Caco-2 (cell line): ENCODE measurements at regions of chr20 and their contacts with region 1.

Region 1: DNA sequence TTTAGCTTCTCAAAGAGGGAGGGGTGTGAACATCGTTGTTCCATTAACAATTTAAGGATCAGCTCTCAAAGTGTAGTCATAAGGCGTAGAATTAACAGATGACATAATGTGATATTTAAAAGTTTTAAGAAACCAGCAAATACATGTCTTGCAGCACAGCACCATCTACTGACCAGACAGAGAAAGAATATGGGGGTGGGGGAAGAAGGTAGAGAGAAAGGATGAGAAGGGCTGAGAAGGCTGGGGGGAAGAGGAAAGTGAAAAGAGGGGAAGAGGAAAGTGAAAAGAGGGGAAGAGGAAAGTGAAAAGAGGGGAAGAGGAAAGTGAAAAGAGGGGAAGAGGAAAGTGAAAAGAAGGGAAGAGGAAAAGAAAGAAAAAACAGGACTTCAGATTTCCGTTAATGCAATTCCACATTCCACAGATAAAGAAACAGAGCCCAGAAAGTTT is 80.9 kb downstream of the HAO1 start:
- DNase-seq: peak in 1 of 2 experiments; percentile 31
- H3K4me3 ChIP-seq: no peak overlapping the region
- H3K4me3 Mint-ChIP-seq: no peak overlapping the region
- H3K27ac Mint-ChIP-seq: no peak overlapping the region
- H3K4me1 ChIP-seq: no peaks in the 10 kb centered on the region
- H3K4me1 Mint-ChIP-seq: no peaks in the 10 kb centered on the region
- H3K27me3 ChIP-seq: no peaks in the 10 kb centered on the region
- H3K27me3 Mint-ChIP-seq: peaks cover 10% of the 10 kb centered on the region
- CTCF ChIP-seq: peak; percentile 38 to 75

Region 2: DNA sequence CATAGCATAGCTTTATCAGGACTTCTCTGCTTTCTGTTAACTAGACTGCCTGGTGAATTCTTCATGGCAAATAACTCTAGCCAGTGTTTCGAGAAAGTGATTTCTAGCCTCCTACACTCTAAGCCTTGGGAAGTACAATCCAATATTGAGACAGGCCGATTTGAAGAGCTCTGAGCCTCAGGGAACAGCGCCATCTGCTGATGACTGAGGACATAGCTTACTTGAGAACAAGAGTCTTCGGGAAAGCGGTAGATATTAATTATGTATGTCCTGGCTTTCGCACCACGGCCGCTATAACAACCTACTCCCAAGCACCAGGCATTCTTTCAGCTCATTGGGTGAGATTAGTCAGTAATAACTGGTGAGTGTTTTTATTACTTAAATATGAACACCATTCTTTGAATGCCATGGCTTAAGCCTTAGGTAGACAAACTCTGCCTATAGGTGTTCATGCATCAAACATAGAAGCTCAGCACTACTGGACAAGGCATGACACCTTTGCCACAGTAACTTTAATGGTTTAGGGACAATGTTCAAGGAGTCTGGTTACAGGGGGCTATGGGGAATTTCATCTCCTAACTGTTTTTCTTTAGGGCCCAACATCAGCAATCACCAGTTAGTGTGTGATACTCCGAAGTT is 573.3 kb before region 1 on chr20:
- CTCF ChIA-PET with region 1: no interaction called
- POLR2A ChIA-PET with region 1: no interaction called
- intact Hi-C with region 1: loop called (anchors 5 kb)
- DNase-seq: peak; percentile 75 to 77
- H3K4me3 ChIP-seq: no peak overlapping the region
- H3K4me3 Mint-ChIP-seq: no peak overlapping the region
- H3K27ac Mint-ChIP-seq: no peak overlapping the region
- H3K4me1 ChIP-seq: 0 out of 2 replicates have a peak, but pooled peaks cover under 1% of the 10 kb centered on the region
- H3K4me1 Mint-ChIP-seq: no peaks in the 10 kb centered on the region
- H3K27me3 ChIP-seq: no peaks in the 10 kb centered on the region
- H3K27me3 Mint-ChIP-seq: no peaks in the 10 kb centered on the region
- CTCF ChIP-seq: peak; percentile 78 to 94

Region 3: GRCh38 chr20:7505152-7505834 is 354.1 kb before region 1 on chr20:
- CTCF ChIA-PET with region 1: no interaction called
- POLR2A ChIA-PET with region 1: no interaction called
- intact Hi-C with region 1: loop called (anchors 10 kb)
- DNase-seq: no peak
- H3K4me3 ChIP-seq: no peak overlapping the region
- H3K4me3 Mint-ChIP-seq: no peak overlapping the region
- H3K27ac Mint-ChIP-seq: no peak overlapping the region
- H3K4me1 ChIP-seq: no peaks in the 10 kb centered on the region
- H3K4me1 Mint-ChIP-seq: no peaks in the 10 kb centered on the region
- H3K27me3 ChIP-seq: no peaks in the 10 kb centered on the region
- H3K27me3 Mint-ChIP-seq: peaks cover 6% of the 10 kb centered on the region
- CTCF ChIP-seq: no peak

Region 4: GRCh38 chr20:7693761-7694160 is 165.6 kb before region 1 on chr20:
- CTCF ChIA-PET with region 1: no interaction called
- POLR2A ChIA-PET with region 1: no interaction called
- intact Hi-C with region 1: loop called (anchors 5 kb)
- DNase-seq: no peak
- H3K4me3 ChIP-seq: no peak overlapping the region
- H3K4me3 Mint-ChIP-seq: no peak overlapping the region
- H3K27ac Mint-ChIP-seq: no peak overlapping the region
- H3K4me1 ChIP-seq: peaks cover 13% of the 10 kb centered on the region
- H3K4me1 Mint-ChIP-seq: peaks cover 7% of the 10 kb centered on the region
- H3K27me3 ChIP-seq: no peaks in the 10 kb centered on the region
- H3K27me3 Mint-ChIP-seq: peaks cover 9% of the 10 kb centered on the region
- CTCF ChIP-seq: no peak